Naive thymus-derived CD4-positive, alpha-beta T cell (primary cell): ENCODE measurements at regions of chr2 and their contacts with region 1.

Region 1: DNA sequence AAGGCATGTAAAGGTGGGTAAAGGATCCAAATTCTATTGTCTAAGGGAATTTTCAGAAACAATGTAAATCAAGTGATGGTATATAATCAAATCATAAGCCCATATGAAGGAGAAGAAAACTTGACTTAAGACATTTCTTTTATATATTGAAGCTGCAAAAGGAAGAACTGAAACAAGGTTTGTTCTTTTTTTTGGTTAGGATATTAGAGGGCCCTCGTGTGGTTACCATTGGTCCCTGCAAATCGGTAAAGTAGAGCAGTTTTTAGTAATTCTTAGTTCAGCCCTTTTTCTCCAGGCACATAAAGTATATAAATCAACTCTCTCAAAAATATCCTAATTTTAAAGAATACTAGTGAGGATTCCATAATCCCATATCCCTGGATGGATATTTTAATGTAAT is 105.6 kb upstream of the STK17B start:
- DNase-seq: peak in 7 of 9 donors; percentile 45 to 74 (median 63)
- ATAC-seq: peak; percentile 79
- H3K4me3 ChIP-seq: no peak overlapping the region
- H3K4me3 Mint-ChIP-seq: peak overlapping the region in 6 of 10 donors; percentile 30 to 83 (median 65)
- H3K27ac ChIP-seq: peak overlapping the region; percentile 63
- H3K27ac Mint-ChIP-seq: peak overlapping the region; percentile 50 to 99 (median 89)
- H3K4me1 ChIP-seq: peaks cover 21 to 42% of the 10 kb centered on the region in 2 donors
- H3K4me1 Mint-ChIP-seq: peaks cover 29 to 60% (median 47%) of the 10 kb centered on the region in 7 donors
- H3K27me3 ChIP-seq: no peaks in the 10 kb centered on the region
- H3K27me3 Mint-ChIP-seq: no peaks in the 10 kb centered on the region

Region 2: DNA sequence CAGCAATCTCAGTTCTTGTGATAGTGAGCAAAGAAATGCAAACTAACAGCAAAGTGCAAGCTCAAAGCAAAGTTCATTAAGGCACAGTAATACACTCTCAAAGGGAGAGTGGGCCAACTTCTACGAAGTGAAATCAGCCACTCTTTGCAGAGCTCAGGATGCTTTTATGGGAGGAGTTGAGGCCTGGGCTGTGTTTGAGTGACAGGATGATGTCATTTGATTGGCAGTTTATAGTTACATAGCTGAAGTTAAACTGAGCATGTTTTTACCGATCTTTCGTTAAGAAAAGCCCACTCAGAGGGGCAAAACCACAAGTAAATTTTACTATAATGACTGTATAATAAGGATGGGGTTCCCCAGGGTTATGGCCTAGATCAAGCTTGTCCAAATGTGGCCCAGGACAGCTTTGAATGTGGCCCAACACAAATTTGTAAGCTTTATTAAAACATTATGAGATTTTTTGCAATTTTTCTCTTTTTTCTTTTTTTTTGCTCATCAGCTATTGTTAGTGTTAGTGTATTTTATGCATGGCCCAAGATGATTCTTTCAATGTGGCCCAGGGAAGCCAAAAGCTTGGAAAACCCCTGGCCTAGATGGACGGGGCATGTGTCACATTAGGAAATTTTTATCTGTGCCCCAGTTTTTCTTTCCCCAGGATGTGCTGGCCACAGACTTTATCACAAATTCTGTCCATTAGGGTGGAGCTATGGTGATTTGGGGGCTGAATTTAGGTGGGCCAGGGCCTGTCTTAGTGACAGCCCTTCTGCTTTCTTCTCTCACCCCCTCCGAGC is 200.0 kb before region 1 on chr2:
- CTCF ChIA-PET with region 1: interaction called, 72 read pairs
- POLR2A ChIA-PET with region 1: interaction called, 13 read pairs
- intact Hi-C with region 1: loop called (anchors 1 kb)
- DNase-seq: no peak
- ATAC-seq: no peak
- H3K4me3 ChIP-seq: no peak overlapping the region
- H3K4me3 Mint-ChIP-seq: no peak overlapping the region
- H3K27ac ChIP-seq: no peak overlapping the region
- H3K27ac Mint-ChIP-seq: no peak overlapping the region
- H3K4me1 ChIP-seq: peaks cover 9 to 13% of the 10 kb centered on the region in 2 donors
- H3K4me1 Mint-ChIP-seq: peaks cover 10 to 34% (median 25%) of the 10 kb centered on the region in 7 donors
- H3K27me3 ChIP-seq: no peaks in the 10 kb centered on the region
- H3K27me3 Mint-ChIP-seq: no peaks in the 10 kb centered on the region

Region 3: GRCh38 chr2:196205881-196206435 is 71.0 kb before region 1 on chr2:
- CTCF ChIA-PET with region 1: interaction called, 4 read pairs
- POLR2A ChIA-PET with region 1: interaction called, 10 read pairs
- intact Hi-C with region 1: loop called (anchors 1 kb)
- DNase-seq: no peak
- ATAC-seq: no peak
- H3K4me3 ChIP-seq: no peak overlapping the region
- H3K4me3 Mint-ChIP-seq: no peak overlapping the region
- H3K27ac ChIP-seq: no peak overlapping the region
- H3K27ac Mint-ChIP-seq: peak overlapping the region in 7 of 9 donors; percentile 28 to 85 (median 66)
- H3K4me1 ChIP-seq: peaks cover 17 to 31% of the 10 kb centered on the region in 2 donors
- H3K4me1 Mint-ChIP-seq: peaks cover 29 to 75% (median 51%) of the 10 kb centered on the region in 7 donors
- H3K27me3 ChIP-seq: no peaks in the 10 kb centered on the region
- H3K27me3 Mint-ChIP-seq: no peaks in the 10 kb centered on the region

Region 4: DNA sequence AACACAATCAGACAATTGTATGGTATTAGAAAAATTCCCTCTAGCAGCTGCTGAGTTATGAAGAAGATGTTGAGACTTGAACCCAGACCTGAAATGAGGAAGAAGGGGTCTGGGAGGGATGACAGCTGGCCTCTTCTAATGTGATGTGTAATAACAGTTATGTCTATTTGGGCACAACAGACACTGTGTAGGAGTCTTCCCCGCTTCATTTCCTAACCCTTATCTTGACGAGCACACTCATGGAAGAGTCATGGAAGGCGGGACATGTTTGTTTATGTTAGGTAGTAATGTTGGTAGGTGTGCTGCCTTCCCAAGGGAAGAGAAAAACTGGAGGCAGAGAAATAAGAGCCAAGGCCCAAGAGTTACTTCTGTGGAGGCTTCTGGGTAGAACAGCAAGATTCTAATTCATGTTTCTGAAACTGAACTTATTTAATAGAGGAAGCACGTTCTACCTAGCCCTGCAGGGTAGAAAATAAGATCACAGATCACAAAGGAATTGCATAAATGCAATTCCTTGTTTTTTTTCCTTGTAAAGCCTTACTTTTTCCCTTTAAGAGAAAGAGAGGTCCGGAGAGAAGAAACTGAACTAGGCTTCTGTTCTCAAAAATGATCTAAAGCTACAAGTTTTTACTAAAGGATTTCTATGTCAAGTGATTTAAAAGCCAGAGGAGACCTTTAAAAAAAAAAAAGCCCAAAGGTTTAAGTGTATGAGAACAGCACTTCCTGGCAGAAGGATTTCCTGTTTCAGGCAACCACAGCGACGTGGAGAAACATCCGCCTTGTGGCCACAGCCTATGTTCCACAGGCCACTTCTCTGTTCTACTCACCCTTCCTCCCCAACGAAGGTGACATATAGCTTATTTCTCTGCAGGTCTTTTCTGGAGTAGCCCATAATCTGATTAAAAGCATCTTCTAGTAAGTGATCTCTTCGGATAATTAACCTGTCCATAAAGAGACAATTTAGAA is 37.1 kb before region 1 on chr2:
- CTCF ChIA-PET with region 1: interaction called, 25 read pairs
- POLR2A ChIA-PET with region 1: interaction called, 33 read pairs
- intact Hi-C with region 1: loop called (anchors 1 kb)
- DNase-seq: peak; percentile 33 to 90 (median 83)
- ATAC-seq: peak; percentile 87
- H3K4me3 ChIP-seq: peak overlapping the region; percentile 36
- H3K4me3 Mint-ChIP-seq: peak overlapping the region; percentile 64 to 87 (median 76)
- H3K27ac ChIP-seq: peak overlapping the region; percentile 71
- H3K27ac Mint-ChIP-seq: peak overlapping the region; percentile 90 to 99 (median 97)
- H3K4me1 ChIP-seq: peaks cover 57 to 60% of the 10 kb centered on the region in 2 donors
- H3K4me1 Mint-ChIP-seq: peaks cover 55 to 90% (median 80%) of the 10 kb centered on the region in 7 donors
- H3K27me3 ChIP-seq: no peaks in the 10 kb centered on the region
- H3K27me3 Mint-ChIP-seq: no peaks in the 10 kb centered on the region

Region 5: DNA sequence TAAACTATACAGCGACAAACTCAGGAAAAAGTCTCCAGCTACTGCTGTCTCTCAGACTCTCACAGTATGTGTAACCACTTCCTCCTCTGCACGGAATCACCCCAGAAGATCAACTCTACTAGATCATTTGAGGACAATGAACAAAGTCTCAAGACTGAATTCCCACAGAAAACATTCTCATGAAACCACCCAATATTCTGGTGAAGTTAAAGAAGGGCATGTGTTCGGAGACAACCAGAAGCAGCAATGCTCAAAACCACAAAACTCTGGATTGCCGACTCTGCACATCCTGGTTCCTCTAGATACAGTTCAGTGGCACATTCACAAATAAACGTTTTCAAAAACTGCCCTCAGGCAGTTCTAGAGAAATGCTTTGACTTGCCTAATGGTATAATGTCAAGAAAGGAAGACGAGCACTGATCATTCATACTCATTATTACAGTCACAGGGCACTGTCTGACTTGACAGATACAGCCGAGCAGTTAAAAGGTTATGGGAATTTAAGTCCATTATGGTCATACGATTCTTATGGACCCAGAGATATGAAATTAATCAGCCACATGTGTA is 13.7 kb before region 1 on chr2:
- CTCF ChIA-PET with region 1: interaction called, 5 read pairs
- POLR2A ChIA-PET with region 1: interaction called, 33 read pairs
- intact Hi-C with region 1: loop called (anchors 1 kb)
- DNase-seq: peak in 7 of 9 donors; percentile 70 to 88 (median 83)
- ATAC-seq: peak; percentile 90
- H3K4me3 ChIP-seq: peak overlapping the region; percentile 31
- H3K4me3 Mint-ChIP-seq: peak overlapping the region; percentile 63 to 90 (median 82)
- H3K27ac ChIP-seq: peak overlapping the region; percentile 87
- H3K27ac Mint-ChIP-seq: peak overlapping the region; percentile 90 to 99 (median 97)
- H3K4me1 ChIP-seq: peaks cover 53 to 82% of the 10 kb centered on the region in 2 donors
- H3K4me1 Mint-ChIP-seq: peaks cover 39 to 94% (median 89%) of the 10 kb centered on the region in 7 donors
- H3K27me3 ChIP-seq: no peaks in the 10 kb centered on the region
- H3K27me3 Mint-ChIP-seq: no peaks in the 10 kb centered on the region

Region 6: DNA sequence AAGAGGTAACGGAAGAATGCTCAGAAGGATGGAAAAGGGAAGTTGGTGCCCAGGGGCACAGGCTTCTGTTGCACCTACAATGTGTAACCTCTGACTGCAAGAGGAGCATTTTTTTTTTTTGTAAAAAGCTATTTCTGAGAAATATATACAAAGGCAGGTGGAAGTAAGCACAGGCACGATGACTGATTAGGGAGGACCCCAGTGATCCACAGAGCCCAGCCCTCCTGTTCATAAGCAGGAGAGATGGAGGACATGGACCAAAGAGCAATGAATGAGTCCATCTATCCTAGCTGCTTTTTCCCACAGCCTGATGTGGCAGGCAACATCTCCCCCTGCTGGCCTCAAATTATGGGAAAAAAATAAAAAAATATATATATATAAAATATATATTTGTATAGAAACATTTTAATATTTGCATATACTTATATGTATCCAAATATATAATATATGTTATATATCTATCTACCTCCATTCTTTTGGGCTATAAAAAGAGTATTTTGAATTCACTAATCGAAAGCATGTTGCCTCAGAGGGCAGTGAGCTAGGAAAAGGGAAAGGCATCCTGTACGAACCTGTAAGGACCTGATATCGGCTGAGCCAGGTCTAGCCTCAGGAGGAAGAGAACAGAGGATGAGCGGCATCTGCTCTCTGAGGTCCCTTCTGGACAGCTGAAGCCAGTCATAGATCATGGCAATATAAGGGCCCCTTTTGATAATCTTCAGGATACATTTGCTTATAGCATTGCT is 60.4 kb after region 1 on chr2:
- CTCF ChIA-PET with region 1: interaction called, 4 read pairs
- POLR2A ChIA-PET with region 1: interaction called, 3 read pairs
- intact Hi-C with region 1: loop called in 1 of 2 experiments (anchors 2 kb)
- DNase-seq: peak in 5 of 9 donors; percentile 10 to 39 (median 19)
- ATAC-seq: peak; percentile 52
- H3K4me3 ChIP-seq: no peak overlapping the region
- H3K4me3 Mint-ChIP-seq: no peak overlapping the region
- H3K27ac ChIP-seq: no peak overlapping the region
- H3K27ac Mint-ChIP-seq: no peak overlapping the region
- H3K4me1 ChIP-seq: no peaks in the 10 kb centered on the region
- H3K4me1 Mint-ChIP-seq: peaks cover 0 to 6% (median 1%) of the 10 kb centered on the region in 7 donors
- H3K27me3 ChIP-seq: no peaks in the 10 kb centered on the region
- H3K27me3 Mint-ChIP-seq: peaks cover 0 to 18% (median 3%) of the 10 kb centered on the region in 5 donors